ENCODE measurements at regions of chr5 and their contacts with region 1.

Region 1: DNA sequence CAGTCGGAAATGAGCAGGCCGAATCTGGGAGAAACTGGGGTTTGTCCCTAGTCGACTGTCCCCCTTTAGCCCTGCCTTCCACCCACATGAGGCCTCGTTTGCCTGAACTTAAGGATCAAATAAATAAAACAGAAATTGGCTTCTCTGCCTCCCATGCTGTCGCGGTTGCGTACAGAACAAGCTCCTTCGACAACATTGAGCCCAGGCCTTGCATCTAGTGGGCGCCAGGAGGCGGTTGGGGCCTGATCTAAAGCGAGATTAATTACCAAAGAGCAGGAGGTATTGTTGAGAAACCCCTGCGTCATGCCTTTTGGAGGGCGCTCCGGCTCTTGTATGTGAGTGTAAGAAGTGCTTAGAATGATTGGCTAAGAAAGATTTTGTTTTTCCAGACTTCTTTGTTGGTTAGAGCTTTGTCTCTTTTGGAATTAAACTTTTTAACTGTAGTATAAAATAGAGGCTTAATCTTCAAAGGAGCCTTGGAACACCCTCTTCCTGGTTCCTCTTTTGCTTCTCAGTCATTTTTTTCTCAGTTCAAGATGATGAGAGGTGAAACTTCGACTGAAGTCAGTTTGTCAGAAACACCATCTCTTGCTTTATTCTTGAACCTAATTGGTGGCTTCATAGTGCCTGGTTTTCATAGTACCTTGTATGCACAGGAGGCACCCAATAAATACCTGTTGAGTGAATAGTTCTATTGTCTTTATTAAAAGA is 827 bp downstream of the ATP6V0E1 start:
- DNase-seq: peak; percentile 91
- H3K4me3 Mint-ChIP-seq: peak overlapping the region; percentile 97
- H3K27ac Mint-ChIP-seq: peak overlapping the region; percentile 97
- H3K4me1 Mint-ChIP-seq: peaks cover 38% of the 10 kb centered on the region
- H3K27me3 Mint-ChIP-seq: no peaks in the 10 kb centered on the region

Region 2: DNA sequence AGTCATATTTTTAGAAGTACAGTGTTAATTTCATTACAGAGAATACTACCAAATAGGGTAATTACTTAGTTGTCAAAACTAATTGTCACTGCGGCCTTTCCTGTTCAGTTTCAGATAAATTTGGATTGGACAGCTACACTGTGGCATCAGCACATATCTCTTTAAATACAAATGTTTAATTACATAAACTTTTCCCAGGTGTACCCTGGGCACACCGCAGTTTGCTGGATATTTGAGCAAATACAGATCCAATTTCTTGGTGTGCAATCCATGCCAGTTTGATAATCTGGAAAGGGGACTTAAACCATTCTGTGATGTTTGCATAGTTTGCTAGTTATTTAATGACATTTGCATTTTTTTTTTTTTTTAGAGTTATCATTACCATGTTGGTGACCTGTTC is 10.0 kb after region 1 on chr5:
- CTCF ChIA-PET with region 1: interaction called, 10 read pairs
- intact Hi-C with region 1: no loop called
- DNase-seq: no peak
- H3K4me3 Mint-ChIP-seq: no peak overlapping the region
- H3K27ac Mint-ChIP-seq: no peak overlapping the region
- H3K4me1 Mint-ChIP-seq: peaks cover 52% of the 10 kb centered on the region
- H3K27me3 Mint-ChIP-seq: no peaks in the 10 kb centered on the region

Region 3: DNA sequence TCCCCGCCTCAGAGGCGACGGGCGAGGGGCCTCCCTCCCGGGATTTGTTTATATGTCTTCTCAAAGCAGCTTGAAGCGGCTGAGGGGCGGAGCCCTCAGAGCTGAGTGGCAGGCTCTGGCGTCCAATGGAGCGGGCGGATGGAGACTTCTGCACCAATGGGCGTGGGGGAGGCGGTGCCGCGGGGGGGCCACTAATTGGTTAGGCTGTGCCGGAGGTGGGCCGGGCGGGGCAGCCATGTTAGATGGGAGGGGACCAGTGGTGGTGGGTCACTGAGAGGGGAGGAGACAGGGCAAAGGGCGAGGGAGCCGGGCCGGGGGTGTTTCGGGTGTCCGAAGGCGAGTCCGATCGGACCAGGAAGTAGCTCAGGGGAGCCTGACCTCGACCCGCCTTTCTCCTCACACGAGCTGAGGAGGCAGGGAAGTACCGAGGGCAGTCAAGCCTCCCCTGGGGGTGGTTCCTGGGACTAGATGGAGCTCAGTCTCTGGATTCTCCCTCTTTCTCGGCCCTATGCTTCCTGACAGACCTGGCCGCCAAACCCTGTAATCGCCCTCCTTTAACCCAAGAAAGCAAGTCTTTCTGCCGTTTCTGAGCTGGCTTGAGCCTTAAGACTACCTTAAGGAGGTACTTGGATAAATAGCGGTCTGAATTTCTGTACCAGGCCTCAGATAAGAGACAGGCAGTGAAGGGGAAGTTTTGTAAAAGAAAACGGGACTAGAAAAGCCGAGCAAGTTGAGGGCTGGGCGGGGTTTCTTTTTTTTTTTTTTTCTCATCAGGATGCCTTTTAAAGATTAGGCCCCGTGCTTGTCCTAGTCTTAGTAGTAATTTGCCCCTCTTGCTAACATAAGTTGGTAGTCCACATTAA is 72.9 kb after region 1 on chr5:
- CTCF ChIA-PET with region 1: interaction called, 20 read pairs
- intact Hi-C with region 1: loop called (anchors 1 kb)
- DNase-seq: peak; percentile 100
- H3K4me3 Mint-ChIP-seq: peak overlapping the region; percentile 91
- H3K27ac Mint-ChIP-seq: peak overlapping the region; percentile 97
- H3K4me1 Mint-ChIP-seq: peaks cover 51% of the 10 kb centered on the region
- H3K27me3 Mint-ChIP-seq: no peaks in the 10 kb centered on the region

Region 4: GRCh38 chr5:173187054-173187789 is 202.8 kb after region 1 on chr5:
- CTCF ChIA-PET with region 1: no interaction called
- intact Hi-C with region 1: loop called (anchors 1 kb)
- DNase-seq: peak; percentile 41
- H3K4me3 Mint-ChIP-seq: no peak overlapping the region
- H3K27ac Mint-ChIP-seq: no peak overlapping the region
- H3K4me1 Mint-ChIP-seq: no peaks in the 10 kb centered on the region
- H3K27me3 Mint-ChIP-seq: no peaks in the 10 kb centered on the region

Region 5: DNA sequence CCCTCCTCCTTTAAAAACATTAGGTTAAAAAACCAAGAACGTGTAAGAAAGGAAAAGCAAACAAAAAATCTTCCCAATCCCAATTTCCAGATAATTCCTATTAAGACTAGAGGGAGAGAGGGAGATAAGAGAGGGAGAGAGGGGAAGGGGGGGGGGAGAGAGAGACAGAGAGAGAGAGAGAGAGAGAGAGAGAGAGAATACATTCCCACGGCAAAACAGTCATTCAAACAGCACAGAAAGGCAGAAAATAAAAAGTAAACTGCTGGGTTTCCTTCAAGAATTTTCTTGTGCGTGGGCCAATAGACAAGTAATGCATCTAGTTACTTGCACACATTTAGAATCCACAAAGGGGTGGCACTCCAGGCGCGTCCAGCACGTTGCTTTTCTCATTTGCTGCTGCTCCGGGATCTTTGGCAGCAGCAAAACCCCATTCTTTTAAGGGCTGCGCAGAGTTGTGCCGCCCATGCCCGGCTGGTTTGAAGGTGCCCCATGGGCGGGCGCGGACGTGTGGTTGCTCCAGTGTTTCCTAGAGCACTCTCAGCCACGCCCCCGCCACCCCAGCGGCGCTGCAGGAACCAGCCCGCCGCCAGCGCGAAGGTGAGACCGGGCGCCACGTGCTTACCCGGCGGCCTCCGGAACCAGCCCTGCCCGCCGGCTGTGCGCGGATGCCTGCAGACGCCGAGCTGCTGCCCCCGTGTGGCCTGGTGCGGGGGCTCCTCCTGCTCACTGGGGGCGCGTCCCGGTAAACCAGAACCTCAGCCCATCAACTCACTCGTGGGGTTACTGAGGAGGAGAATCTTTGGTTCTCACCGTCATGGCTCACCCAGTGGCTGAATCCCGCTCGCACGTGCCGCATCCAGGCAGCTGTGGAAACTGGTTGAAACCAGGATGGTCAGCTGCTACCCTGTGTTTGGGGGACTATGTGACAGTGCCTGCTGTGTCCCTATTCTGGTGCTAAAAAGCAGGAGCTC is 299.2 kb after region 1 on chr5:
- CTCF ChIA-PET with region 1: interaction called, 7 read pairs
- intact Hi-C with region 1: loop called (anchors 1 kb)
- DNase-seq: peak; percentile 83
- H3K4me3 Mint-ChIP-seq: peak overlapping the region; percentile 35
- H3K27ac Mint-ChIP-seq: no peak overlapping the region
- H3K4me1 Mint-ChIP-seq: peaks cover 6% of the 10 kb centered on the region
- H3K27me3 Mint-ChIP-seq: peaks cover 57% of the 10 kb centered on the region

Measured in activated naive CD4-positive, alpha-beta T cell treated with anti-CD3 and anti-CD28 coated beads for 36 hours (primary cell).